ENCODE measurements at regions of chr7 and their contacts with region 1.

Region 1: GRCh38 chr7:94452239-94452638 is 57.4 kb upstream of the CASD1 start:
- DNase-seq: no peak
- H3K4me3 ChIP-seq: no peak overlapping the region
- H3K27ac ChIP-seq: no peak overlapping the region
- H3K4me1 ChIP-seq: peaks cover 4% of the 10 kb centered on the region
- H3K27me3 ChIP-seq: no peaks in the 10 kb centered on the region
- CTCF ChIP-seq: no peak
- EP300 ChIP-seq: no peak
- POLR2A ChIP-seq: no peak

Region 2: GRCh38 chr7:94289071-94289470 is 163.2 kb before region 1 on chr7:
- intact Hi-C with region 1: no loop called
- DNase-seq: peak; percentile 66 to 84 (median 68)
- H3K4me3 ChIP-seq: no peak overlapping the region
- H3K27ac ChIP-seq: no peak overlapping the region
- H3K4me1 ChIP-seq: no peaks in the 10 kb centered on the region
- H3K27me3 ChIP-seq: no peaks in the 10 kb centered on the region
- CTCF ChIP-seq: peak; percentile 69 to 92 (median 91)
- EP300 ChIP-seq: no peak
- POLR2A ChIP-seq: no peak

Region 3: DNA sequence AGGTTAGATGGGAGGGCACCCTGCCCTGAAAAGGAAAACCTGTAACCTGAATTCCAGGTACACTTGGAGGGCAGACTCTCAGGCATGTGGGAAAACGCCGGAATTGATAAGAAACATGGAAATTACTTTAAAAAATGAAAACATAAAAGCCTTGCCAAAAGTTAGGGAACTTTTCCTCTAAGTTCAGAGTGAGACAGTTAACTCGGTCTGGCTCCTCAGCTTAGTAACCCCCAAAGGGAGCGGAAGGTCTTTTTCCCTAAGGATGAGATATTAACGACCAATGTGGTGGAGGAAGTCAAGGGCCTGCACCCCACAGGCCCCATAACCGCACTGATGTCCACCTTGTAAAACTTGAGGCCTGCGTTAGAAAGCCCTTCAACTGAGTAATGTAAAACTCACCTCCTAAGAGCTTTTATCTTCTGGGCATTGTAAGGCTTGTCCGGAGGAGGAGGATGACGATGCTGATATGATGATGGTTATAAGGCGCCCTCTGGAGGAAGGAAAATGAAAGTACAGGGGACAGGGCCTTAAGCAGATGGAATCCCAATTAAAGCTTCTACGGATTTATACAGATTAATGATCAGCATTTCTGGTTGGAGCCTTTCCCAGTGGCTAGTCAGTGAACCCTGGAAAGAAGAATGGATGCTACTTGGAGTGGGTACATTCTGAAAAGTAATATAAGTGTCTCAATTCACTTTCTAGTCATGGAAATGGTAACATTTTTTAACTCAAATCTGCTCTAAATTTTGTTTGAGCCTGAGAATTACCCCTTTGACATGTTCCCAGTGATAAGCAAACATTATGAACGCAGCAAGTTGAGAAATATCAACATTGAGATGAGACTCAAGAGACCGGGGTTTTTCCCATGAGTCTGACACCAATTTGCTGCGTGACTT is 56.9 kb before region 1 on chr7:
- intact Hi-C with region 1: no loop called
- DNase-seq: peak; percentile 48 to 80 (median 55)
- H3K4me3 ChIP-seq: peak overlapping the region; percentile 57
- H3K27ac ChIP-seq: peak overlapping the region; percentile 61 to 93
- H3K4me1 ChIP-seq: peaks cover 5% of the 10 kb centered on the region
- H3K27me3 ChIP-seq: no peaks in the 10 kb centered on the region
- CTCF ChIP-seq: peak; percentile 75 to 96 (median 87)
- EP300 ChIP-seq: peak; percentile 13
- POLR2A ChIP-seq: no peak

Region 4: DNA sequence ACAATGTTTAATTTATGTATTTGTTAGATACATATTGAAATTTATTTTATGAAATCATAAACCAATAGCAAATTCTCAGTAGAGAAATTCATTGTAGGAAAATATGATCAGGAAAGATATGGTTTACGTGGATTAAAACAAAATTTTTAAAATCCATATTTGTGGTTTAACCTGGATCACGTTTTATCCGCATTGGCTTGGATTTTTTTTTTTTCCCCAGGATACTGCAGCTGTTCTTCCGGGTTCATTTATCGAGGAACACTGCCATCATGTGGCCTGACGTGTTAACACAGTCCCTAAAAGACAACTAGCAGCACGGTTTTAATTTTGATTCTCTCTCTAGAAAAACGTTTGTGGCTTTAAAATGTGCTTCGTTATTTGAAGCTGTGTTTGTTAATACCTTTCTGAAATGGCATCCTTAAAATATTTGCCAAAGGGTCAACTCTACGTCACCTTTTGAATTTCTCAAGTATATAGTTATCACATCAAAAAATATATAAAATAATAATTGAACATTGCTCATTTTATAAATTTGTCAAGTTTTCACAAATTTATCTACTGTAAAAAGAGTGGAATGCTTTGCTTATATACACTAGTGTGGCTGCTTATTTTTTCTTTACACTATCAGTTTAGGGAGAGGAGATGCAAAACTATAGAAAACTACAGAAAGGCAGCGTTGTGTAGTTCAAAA is 1024.8 kb after region 1 on chr7:
- intact Hi-C with region 1: loop called in 1 of 4 experiments (anchors 5 kb)
- DNase-seq: peak; percentile 61 to 81 (median 67)
- H3K4me3 ChIP-seq: no peak overlapping the region
- H3K27ac ChIP-seq: no peak overlapping the region
- H3K4me1 ChIP-seq: peaks cover 7% of the 10 kb centered on the region
- H3K27me3 ChIP-seq: no peaks in the 10 kb centered on the region
- CTCF ChIP-seq: peak; percentile 61 to 73 (median 65)
- EP300 ChIP-seq: no peak
- POLR2A ChIP-seq: no peak

Measured in ovary (tissue), 10 donors.